Calu3 (cell line): ENCODE measurements at regions of chr22 and their contacts with region 1.

Region 1: GRCh38 chr22:31970490-31971444 is 26.4 kb downstream of the YWHAH start:
- DNase-seq: peak; percentile 96
- H3K4me3 Mint-ChIP-seq: peak overlapping the region; percentile 89
- H3K27ac Mint-ChIP-seq: peak overlapping the region; percentile 19
- H3K4me1 Mint-ChIP-seq: peaks cover 32% of the 10 kb centered on the region
- H3K27me3 Mint-ChIP-seq: no peaks in the 10 kb centered on the region
- CTCF ChIP-seq: peak; percentile 90

Region 2: DNA sequence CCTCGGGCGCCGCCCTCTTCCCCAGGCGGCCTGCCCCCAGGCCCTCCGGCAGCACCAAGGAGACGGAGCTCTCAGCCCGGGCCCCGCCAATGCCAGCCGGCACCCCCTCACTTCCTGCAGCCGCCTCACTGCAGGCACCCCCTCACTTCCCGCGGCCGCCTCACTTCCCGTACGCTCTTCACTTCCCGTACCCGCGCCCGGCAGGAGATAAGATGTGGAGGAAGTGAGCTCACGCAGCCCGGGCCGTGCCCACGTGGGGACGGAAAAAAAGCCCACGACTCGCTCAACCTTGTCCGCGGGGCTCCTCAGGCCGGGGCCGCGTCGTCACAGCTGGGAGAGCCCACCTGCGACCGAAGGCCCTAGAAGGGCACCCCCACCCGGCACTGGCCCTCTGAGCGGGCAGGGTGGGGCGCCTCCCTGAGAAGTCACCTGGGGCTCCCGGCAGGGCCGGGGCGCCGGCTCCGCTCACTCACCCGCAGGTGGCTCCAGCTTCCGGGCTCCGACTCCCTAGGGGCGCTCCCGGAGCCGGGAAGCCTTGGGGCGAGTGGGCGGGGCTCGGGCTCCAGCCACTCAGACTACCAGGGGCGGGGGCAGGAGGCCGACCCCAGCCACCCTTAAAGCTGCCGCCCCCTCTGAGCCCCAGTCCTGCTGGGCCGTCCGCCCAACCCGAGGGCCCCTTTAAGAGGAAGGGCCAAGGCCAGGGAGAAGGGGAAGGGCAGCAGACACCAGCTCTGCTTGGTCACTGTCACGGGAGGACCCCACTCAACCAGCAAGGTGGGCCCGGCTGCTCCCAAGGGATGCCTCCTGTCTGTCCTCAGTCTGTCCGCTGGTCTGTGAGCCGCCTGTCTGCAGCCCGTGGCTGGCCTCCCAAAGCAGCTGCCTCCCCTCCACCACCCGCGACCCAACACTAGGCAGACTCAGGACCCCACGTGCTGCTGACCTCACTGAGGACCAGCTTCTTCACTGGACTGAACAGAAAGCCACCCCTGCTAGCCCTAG is 340.1 kb before region 1 on chr22:
- CTCF ChIA-PET with region 1: interaction called, 14 read pairs
- intact Hi-C with region 1: no loop called
- DNase-seq: peak; percentile 95
- H3K4me3 Mint-ChIP-seq: peak overlapping the region; percentile 98
- H3K27ac Mint-ChIP-seq: peak overlapping the region; percentile 82
- H3K4me1 Mint-ChIP-seq: peaks cover 43% of the 10 kb centered on the region
- H3K27me3 Mint-ChIP-seq: no peaks in the 10 kb centered on the region
- CTCF ChIP-seq: no peak

Region 3: GRCh38 chr22:31661851-31662656 is 308.7 kb before region 1 on chr22 and contains the start of gene PISD:
- CTCF ChIA-PET with region 1: interaction called, 17 read pairs
- intact Hi-C with region 1: loop called (anchors 5 kb)
- DNase-seq: peak; percentile 97
- H3K4me3 Mint-ChIP-seq: peak within 1 kb of the TSS; percentile 93
- H3K27ac Mint-ChIP-seq: peak within 1 kb of the TSS; percentile 99
- H3K4me1 Mint-ChIP-seq: peaks cover 25% of the 10 kb centered on the region
- H3K27me3 Mint-ChIP-seq: no peaks in the 10 kb centered on the region
- CTCF ChIP-seq: no peak
- total RNA-seq, gene PISD: 45.9 and 53.4 TPM in 2 replicates

Region 4: DNA sequence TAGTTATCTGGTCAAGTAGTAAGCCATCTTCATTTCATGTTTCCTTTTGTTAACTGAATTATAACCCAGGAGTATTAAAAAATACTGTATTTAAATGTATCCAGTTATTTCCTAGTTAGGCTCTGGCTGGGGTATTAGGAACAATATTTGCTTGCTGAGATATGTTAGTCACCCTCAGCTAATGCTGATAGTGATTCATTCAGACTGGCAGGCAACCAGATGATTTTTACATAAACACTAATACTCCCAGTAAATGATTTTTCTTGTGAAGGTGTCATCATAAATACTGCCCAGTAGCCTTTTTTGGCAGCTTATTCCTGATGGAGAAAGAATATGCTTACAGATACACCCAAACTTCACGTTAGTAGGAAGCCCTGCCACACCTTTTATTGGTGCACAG is 18.3 kb before region 1 on chr22:
- CTCF ChIA-PET with region 1: interaction called, 18 read pairs
- intact Hi-C with region 1: no loop called
- DNase-seq: no peak
- H3K4me3 Mint-ChIP-seq: no peak overlapping the region
- H3K27ac Mint-ChIP-seq: no peak overlapping the region
- H3K4me1 Mint-ChIP-seq: peaks cover 48% of the 10 kb centered on the region
- H3K27me3 Mint-ChIP-seq: no peaks in the 10 kb centered on the region
- CTCF ChIP-seq: no peak

Region 5: DNA sequence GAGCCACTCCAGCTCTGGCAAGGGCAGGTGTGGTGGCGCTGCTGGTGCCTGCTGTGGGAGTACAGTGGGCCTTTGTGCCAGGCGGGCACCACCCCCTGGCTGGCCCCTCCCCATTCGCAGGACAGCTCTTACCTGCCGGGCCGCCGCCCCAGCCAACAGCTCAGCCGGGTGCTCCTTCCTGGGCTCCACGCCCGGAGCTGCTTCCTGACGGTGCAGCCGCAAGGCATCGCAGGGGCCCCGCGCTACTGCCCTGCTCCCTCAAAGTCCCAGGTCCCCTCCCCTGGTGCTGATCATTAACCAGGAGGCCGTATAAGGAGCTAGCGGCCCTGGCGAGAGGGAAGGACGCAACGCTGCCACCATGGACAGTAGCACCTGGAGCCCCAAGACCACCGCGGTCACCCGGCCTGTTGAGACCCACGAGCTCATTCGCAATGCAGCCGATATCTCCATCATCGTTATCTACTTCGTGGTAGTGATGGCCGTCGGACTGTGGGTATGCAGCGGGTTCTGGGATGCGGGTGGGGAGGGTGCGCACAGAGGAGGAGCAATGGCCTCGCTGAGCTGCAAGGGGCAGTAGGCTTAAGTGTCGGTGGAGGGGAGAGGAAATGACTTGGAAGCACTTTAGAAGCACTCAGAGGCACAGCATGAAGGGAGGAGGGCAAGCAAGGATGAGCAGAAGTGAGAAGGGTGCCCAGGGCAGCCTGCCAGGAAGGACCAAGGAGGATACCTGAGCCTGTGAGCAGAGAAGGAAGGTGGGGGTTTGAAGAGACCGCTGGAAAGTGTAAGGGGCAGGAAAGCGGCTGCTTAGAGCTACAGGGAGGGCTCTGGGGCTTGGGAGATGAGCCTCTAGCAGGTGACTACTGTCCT is 72.4 kb after region 1 on chr22 and contains the start of gene SLC5A1:
- CTCF ChIA-PET with region 1: interaction called, 13 read pairs
- intact Hi-C with region 1: no loop called
- DNase-seq: peak; percentile 95
- H3K4me3 Mint-ChIP-seq: peak within 1 kb of the TSS; percentile 35
- H3K27ac Mint-ChIP-seq: peak within 1 kb of the TSS; percentile 54
- H3K4me1 Mint-ChIP-seq: peaks cover 26% of the 10 kb centered on the region
- H3K27me3 Mint-ChIP-seq: peaks cover 7% of the 10 kb centered on the region
- CTCF ChIP-seq: no peak
- total RNA-seq, gene SLC5A1: 7.5 and 8.6 TPM in 2 replicates

Region 6: DNA sequence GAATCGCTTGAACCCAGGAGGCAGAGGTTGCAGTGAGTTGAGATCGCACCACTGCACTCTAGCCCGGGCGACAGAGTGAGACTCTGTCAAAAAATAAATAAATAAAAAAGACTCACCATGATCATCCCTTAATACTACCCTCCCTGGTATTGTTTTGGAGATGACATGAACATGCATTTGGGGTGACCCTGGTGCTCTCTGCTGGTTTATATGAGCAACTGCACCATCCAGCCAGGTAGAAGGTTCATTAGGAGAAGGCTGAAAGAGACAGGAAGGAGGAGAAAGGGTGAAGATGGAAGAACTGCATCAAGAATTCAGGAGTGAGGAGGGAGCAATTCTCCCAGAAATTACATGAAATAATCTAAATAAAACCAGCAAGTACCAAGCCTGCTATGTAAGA is 110.1 kb after region 1 on chr22:
- CTCF ChIA-PET with region 1: interaction called, 46 read pairs
- intact Hi-C with region 1: no loop called
- DNase-seq: peak; percentile 55
- H3K4me3 Mint-ChIP-seq: no peak overlapping the region
- H3K27ac Mint-ChIP-seq: no peak overlapping the region
- H3K4me1 Mint-ChIP-seq: peaks cover 15% of the 10 kb centered on the region
- H3K27me3 Mint-ChIP-seq: peaks cover 3% of the 10 kb centered on the region
- CTCF ChIP-seq: peak; percentile 82

Region 7: GRCh38 chr22:32378707-32379272 is 408.0 kb after region 1 on chr22:
- CTCF ChIA-PET with region 1: no interaction called
- intact Hi-C with region 1: loop called (anchors 10 kb)
- DNase-seq: peak; percentile 59
- H3K4me3 Mint-ChIP-seq: no peak overlapping the region
- H3K27ac Mint-ChIP-seq: no peak overlapping the region
- H3K4me1 Mint-ChIP-seq: no peaks in the 10 kb centered on the region
- H3K27me3 Mint-ChIP-seq: peaks cover 35% of the 10 kb centered on the region
- CTCF ChIP-seq: peak; percentile 82